CD8-positive, alpha-beta T cell (primary cell): ENCODE measurements at regions of chr10 and their contacts with region 1.

Region 1: GRCh38 chr10:88932539-88933256 is 19.9 kb downstream of the ACTA2 start:
- DNase-seq: peak in 7 of 9 experiments; percentile 17 to 72 (median 34)
- ATAC-seq: peak; percentile 78
- H3K4me3 ChIP-seq: no peak overlapping the region
- H3K4me3 Mint-ChIP-seq: no peak overlapping the region
- H3K27ac ChIP-seq: no peak overlapping the region
- H3K27ac Mint-ChIP-seq: no peak overlapping the region
- H3K4me1 ChIP-seq: peaks cover 5% of the 10 kb centered on the region
- H3K4me1 Mint-ChIP-seq: peaks cover 15% of the 10 kb centered on the region
- H3K27me3 ChIP-seq: no peaks in the 10 kb centered on the region
- H3K27me3 Mint-ChIP-seq: no peaks in the 10 kb centered on the region
- CTCF ChIP-seq: peak; percentile 75

Region 2: GRCh38 chr10:88810196-88810961 is 122.3 kb before region 1 on chr10:
- CTCF ChIA-PET with region 1: interaction called, 21 read pairs
- POLR2A ChIA-PET with region 1: no interaction called
- intact Hi-C with region 1: no loop called
- DNase-seq: peak in 5 of 9 experiments; percentile 20 to 77 (median 35)
- ATAC-seq: peak; percentile 73
- H3K4me3 ChIP-seq: no peak overlapping the region
- H3K4me3 Mint-ChIP-seq: no peak overlapping the region
- H3K27ac ChIP-seq: no peak overlapping the region
- H3K27ac Mint-ChIP-seq: no peak overlapping the region
- H3K4me1 ChIP-seq: peaks cover 6% of the 10 kb centered on the region
- H3K4me1 Mint-ChIP-seq: peaks cover 17% of the 10 kb centered on the region
- H3K27me3 ChIP-seq: no peaks in the 10 kb centered on the region
- H3K27me3 Mint-ChIP-seq: no peaks in the 10 kb centered on the region
- CTCF ChIP-seq: peak; percentile 66

Region 3: GRCh38 chr10:88835096-88835909 is 97.4 kb before region 1 on chr10:
- CTCF ChIA-PET with region 1: interaction called, 353 read pairs
- POLR2A ChIA-PET with region 1: interaction called, 8 read pairs
- intact Hi-C with region 1: loop called (anchors 1 kb)
- DNase-seq: peak; percentile 73 to 92 (median 86)
- ATAC-seq: peak; percentile 85
- H3K4me3 ChIP-seq: no peak overlapping the region
- H3K4me3 Mint-ChIP-seq: no peak overlapping the region
- H3K27ac ChIP-seq: no peak overlapping the region
- H3K27ac Mint-ChIP-seq: no peak overlapping the region
- H3K4me1 ChIP-seq: peaks cover 17% of the 10 kb centered on the region
- H3K4me1 Mint-ChIP-seq: peaks cover 33% of the 10 kb centered on the region
- H3K27me3 ChIP-seq: no peaks in the 10 kb centered on the region
- H3K27me3 Mint-ChIP-seq: no peaks in the 10 kb centered on the region
- CTCF ChIP-seq: peak; percentile 78

Region 4: GRCh38 chr10:88886557-88886956 is 46.1 kb before region 1 on chr10:
- CTCF ChIA-PET with region 1: interaction called, 21 read pairs
- POLR2A ChIA-PET with region 1: no interaction called
- intact Hi-C with region 1: loop called in 1 of 2 experiments (anchors 5 kb)
- DNase-seq: no peak
- ATAC-seq: no peak
- H3K4me3 ChIP-seq: no peak overlapping the region
- H3K4me3 Mint-ChIP-seq: no peak overlapping the region
- H3K27ac ChIP-seq: no peak overlapping the region
- H3K27ac Mint-ChIP-seq: no peak overlapping the region
- H3K4me1 ChIP-seq: peaks cover 49% of the 10 kb centered on the region
- H3K4me1 Mint-ChIP-seq: peaks cover 84% of the 10 kb centered on the region
- H3K27me3 ChIP-seq: no peaks in the 10 kb centered on the region
- H3K27me3 Mint-ChIP-seq: no peaks in the 10 kb centered on the region
- CTCF ChIP-seq: no peak

Region 5: DNA sequence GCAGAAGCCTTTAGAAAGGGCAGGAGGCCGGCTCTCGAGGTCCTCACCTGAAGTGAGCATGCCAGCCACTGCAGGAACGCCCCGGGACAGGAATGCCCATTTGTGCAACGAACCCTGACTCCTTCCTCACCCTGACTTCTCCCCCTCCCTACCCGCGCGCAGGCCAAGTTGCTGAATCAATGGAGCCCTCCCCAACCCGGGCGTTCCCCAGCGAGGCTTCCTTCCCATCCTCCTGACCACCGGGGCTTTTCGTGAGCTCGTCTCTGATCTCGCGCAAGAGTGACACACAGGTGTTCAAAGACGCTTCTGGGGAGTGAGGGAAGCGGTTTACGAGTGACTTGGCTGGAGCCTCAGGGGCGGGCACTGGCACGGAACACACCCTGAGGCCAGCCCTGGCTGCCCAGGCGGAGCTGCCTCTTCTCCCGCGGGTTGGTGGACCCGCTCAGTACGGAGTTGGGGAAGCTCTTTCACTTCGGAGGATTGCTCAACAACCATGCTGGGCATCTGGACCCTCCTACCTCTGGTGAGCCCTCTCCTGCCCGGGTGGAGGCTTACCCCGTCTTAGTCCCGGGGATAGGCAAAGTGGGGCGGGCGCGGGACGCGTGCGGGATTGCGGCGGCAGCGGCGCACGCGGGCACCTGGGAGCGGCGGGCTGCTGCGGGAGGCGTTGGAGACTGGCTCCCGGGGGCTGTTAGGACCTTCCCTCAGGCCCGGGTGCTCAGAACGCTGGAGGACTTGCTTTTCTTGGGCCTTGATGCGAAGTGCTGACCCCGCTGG is 57.9 kb after region 1 on chr10 and contains the start of gene FAS:
- CTCF ChIA-PET with region 1: interaction called, 40 read pairs
- POLR2A ChIA-PET with region 1: interaction called, 5 read pairs
- intact Hi-C with region 1: loop called (anchors 2 kb)
- DNase-seq: peak; percentile 44 to 95 (median 79)
- ATAC-seq: peak; percentile 72
- H3K4me3 ChIP-seq: peak within 1 kb of the TSS; percentile 79 to 92
- H3K4me3 Mint-ChIP-seq: peak within 1 kb of the TSS; percentile 98
- H3K27ac ChIP-seq: peak within 1 kb of the TSS; percentile 52 to 78
- H3K27ac Mint-ChIP-seq: peak within 1 kb of the TSS; percentile 97
- H3K4me1 ChIP-seq: peaks cover 41% of the 10 kb centered on the region
- H3K4me1 Mint-ChIP-seq: peaks cover 70% of the 10 kb centered on the region
- H3K27me3 ChIP-seq: no peaks in the 10 kb centered on the region
- H3K27me3 Mint-ChIP-seq: no peaks in the 10 kb centered on the region
- CTCF ChIP-seq: no peak
- total RNA-seq, gene FAS: 27.7 to 28.9 TPM

Region 6: DNA sequence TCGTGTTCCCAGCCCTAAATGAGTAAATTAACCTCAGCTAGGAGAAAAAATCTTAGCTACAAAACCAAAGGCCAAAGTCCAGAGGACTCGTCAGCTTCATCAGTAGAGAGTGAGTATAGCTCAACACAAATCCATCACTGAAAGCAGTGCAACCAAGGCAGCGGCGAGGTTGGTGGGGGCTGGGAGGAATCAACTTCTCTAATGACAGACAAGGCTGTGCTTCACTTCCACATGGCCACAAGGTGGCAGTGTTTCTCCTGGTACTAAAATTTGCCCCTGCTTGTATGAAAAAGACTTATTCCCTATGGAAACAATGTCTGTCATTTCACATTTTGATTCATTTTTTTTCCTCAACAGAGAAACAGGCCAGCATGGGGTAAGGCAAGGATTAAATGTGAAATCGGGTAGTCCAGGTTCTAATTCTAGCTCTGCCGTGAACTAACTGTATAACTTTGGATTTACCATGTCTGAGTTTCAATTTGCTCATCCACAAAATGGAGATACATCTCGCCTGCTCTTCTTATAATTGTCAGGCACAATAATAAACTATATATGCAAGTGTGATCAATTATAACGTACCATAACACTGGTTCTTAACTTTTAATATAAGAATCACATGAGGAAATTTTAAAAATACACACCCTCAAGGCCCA is 97.2 kb after region 1 on chr10:
- CTCF ChIA-PET with region 1: interaction called, 49 read pairs
- POLR2A ChIA-PET with region 1: no interaction called
- intact Hi-C with region 1: loop called (anchors 1 to 2 kb)
- DNase-seq: peak; percentile 34 to 81 (median 68)
- ATAC-seq: peak; percentile 87
- H3K4me3 ChIP-seq: no peak overlapping the region
- H3K4me3 Mint-ChIP-seq: no peak overlapping the region
- H3K27ac ChIP-seq: no peak overlapping the region
- H3K27ac Mint-ChIP-seq: no peak overlapping the region
- H3K4me1 ChIP-seq: no peaks in the 10 kb centered on the region
- H3K4me1 Mint-ChIP-seq: peaks cover 4% of the 10 kb centered on the region
- H3K27me3 ChIP-seq: no peaks in the 10 kb centered on the region
- H3K27me3 Mint-ChIP-seq: no peaks in the 10 kb centered on the region
- CTCF ChIP-seq: peak; percentile 91

Region 7: DNA sequence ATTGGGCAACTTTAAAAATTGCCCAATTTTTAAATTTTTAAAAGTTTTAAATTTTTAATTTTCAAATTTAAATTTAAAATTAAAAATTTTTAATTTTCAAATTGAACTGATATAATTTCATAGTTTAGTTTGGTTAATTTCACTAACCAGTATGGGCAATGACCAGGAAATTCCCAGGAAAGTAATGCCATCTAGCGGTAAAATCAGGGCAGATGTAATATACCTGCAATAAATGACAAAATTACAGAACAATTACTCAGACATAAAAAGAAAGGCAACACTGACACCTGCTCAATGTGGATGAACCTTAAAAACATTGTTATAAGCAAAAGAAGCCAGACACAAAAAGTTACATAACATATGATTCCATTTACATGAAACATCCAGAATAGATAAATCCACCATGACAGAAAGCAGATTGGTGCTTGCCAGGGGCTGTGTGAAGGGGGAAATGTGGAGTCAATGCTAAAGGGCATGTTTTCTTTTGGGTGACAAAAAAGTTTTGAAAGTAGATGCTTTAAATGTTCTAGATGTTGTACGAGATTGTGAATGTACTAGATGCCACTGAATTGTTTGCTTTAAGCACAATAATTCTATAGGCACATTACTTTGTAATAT is 631.3 kb after region 1 on chr10:
- CTCF ChIA-PET with region 1: no interaction called
- POLR2A ChIA-PET with region 1: no interaction called
- intact Hi-C with region 1: loop called in 1 of 2 experiments (anchors 10 kb)
- DNase-seq: peak in 3 of 9 experiments; percentile 13 to 71 (median 60)
- ATAC-seq: peak; percentile 59
- H3K4me3 ChIP-seq: no peak overlapping the region
- H3K4me3 Mint-ChIP-seq: no peak overlapping the region
- H3K27ac ChIP-seq: no peak overlapping the region
- H3K27ac Mint-ChIP-seq: no peak overlapping the region
- H3K4me1 ChIP-seq: no peaks in the 10 kb centered on the region
- H3K4me1 Mint-ChIP-seq: no peaks in the 10 kb centered on the region
- H3K27me3 ChIP-seq: no peaks in the 10 kb centered on the region
- H3K27me3 Mint-ChIP-seq: peaks cover 6% of the 10 kb centered on the region
- CTCF ChIP-seq: peak; percentile 81